OCI-LY7 (cell line): ENCODE measurements at regions of chr10 and their contacts with region 1.

Region 1: GRCh38 chr10:114103284-114103683 is 59.6 kb downstream of the ADRB1 start:
- DNase-seq: peak; percentile 63
- H3K4me3 ChIP-seq: no peak overlapping the region
- H3K27ac ChIP-seq: no peak overlapping the region
- H3K4me1 ChIP-seq: peaks cover 18% of the 10 kb centered on the region
- CTCF ChIP-seq: peak; percentile 87

Region 2: GRCh38 chr10:113704637-113705343 is 398.5 kb before region 1 on chr10:
- CTCF ChIA-PET with region 1: no interaction called
- POLR2A ChIA-PET with region 1: no interaction called
- intact Hi-C with region 1: loop called (anchors 1 kb)
- DNase-seq: peak; percentile 54
- H3K4me3 ChIP-seq: no peak overlapping the region
- H3K27ac ChIP-seq: no peak overlapping the region
- H3K4me1 ChIP-seq: no peaks in the 10 kb centered on the region
- CTCF ChIP-seq: peak; percentile 93

Region 3: GRCh38 chr10:113922787-113923570 is 180.3 kb before region 1 on chr10:
- CTCF ChIA-PET with region 1: no interaction called
- POLR2A ChIA-PET with region 1: no interaction called
- intact Hi-C with region 1: loop called (anchors 2 kb)
- DNase-seq: peak; percentile 44
- H3K4me3 ChIP-seq: no peak overlapping the region
- H3K27ac ChIP-seq: no peak overlapping the region
- H3K4me1 ChIP-seq: peaks cover 7% of the 10 kb centered on the region
- CTCF ChIP-seq: peak; percentile 70

Region 4: GRCh38 chr10:114181981-114182380 is 78.7 kb after region 1 on chr10:
- CTCF ChIA-PET with region 1: no interaction called
- POLR2A ChIA-PET with region 1: no interaction called
- intact Hi-C with region 1: no loop called
- DNase-seq: no peak
- H3K4me3 ChIP-seq: no peak overlapping the region
- H3K27ac ChIP-seq: no peak overlapping the region
- H3K4me1 ChIP-seq: no peaks in the 10 kb centered on the region
- CTCF ChIP-seq: no peak